Natural killer cell (primary cell): ENCODE measurements at regions of chr19 and their contacts with region 1.

Region 1: GRCh38 chr19:38862321-38863059 is 12.7 kb upstream of the HNRNPL start:
- DNase-seq: no peak
- ATAC-seq: no peak
- H3K4me3 ChIP-seq: no peak overlapping the region
- H3K4me3 Mint-ChIP-seq: no peak overlapping the region
- H3K27ac ChIP-seq: no peak overlapping the region
- H3K27ac Mint-ChIP-seq: peak overlapping the region; percentile 29 to 53
- H3K4me1 ChIP-seq: peaks cover 54% of the 10 kb centered on the region
- H3K4me1 Mint-ChIP-seq: peaks cover 35 to 38% of the 10 kb centered on the region in 2 donors
- H3K27me3 ChIP-seq: no peaks in the 10 kb centered on the region
- H3K27me3 Mint-ChIP-seq: no peaks in the 10 kb centered on the region
- CTCF ChIP-seq: no peak

Region 2: GRCh38 chr19:38805180-38805579 is 57.3 kb before region 1 on chr19:
- intact Hi-C with region 1: no loop called
- DNase-seq: no peak
- ATAC-seq: no peak
- H3K4me3 ChIP-seq: no peak overlapping the region
- H3K4me3 Mint-ChIP-seq: no peak overlapping the region
- H3K27ac ChIP-seq: no peak overlapping the region
- H3K27ac Mint-ChIP-seq: peak overlapping the region in 1 of 2 donors; percentile 67
- H3K4me1 ChIP-seq: peaks cover 3% of the 10 kb centered on the region
- H3K4me1 Mint-ChIP-seq: peaks cover 0 to 6% of the 10 kb centered on the region in 2 donors
- H3K27me3 ChIP-seq: no peaks in the 10 kb centered on the region
- H3K27me3 Mint-ChIP-seq: no peaks in the 10 kb centered on the region
- CTCF ChIP-seq: no peak

Region 3: DNA sequence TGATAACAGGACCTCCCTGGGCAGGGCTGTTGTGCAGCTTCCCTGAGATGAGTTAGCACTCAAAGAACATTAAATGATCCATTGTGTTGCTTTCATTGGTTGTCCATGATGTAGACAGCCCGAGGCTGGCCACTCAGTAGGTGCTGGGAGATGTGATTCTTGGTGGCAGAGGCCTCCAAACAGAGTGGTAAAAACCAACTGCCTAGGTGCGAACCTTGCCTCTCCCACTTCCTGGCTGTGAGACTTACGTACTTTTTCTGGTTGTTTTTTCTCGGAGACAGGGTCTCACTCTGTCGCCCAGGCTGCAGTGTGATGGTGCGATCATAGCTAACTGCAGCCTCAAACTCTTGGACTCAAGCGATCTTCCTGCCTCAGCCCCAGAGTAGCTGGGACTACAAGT is 61.9 kb after region 1 on chr19:
- intact Hi-C with region 1: loop called (anchors 1 kb)
- DNase-seq: peak; percentile 65 to 74
- ATAC-seq: peak; percentile 78 to 89 (median 84)
- H3K4me3 ChIP-seq: no peak overlapping the region
- H3K4me3 Mint-ChIP-seq: peak overlapping the region; percentile 33
- H3K27ac ChIP-seq: peak overlapping the region; percentile 90
- H3K27ac Mint-ChIP-seq: peak overlapping the region; percentile 91 to 99
- H3K4me1 ChIP-seq: peaks cover 60% of the 10 kb centered on the region
- H3K4me1 Mint-ChIP-seq: peaks cover 25 to 48% of the 10 kb centered on the region in 2 donors
- H3K27me3 ChIP-seq: no peaks in the 10 kb centered on the region
- H3K27me3 Mint-ChIP-seq: no peaks in the 10 kb centered on the region
- CTCF ChIP-seq: no peak